Tibial artery (tissue), 4 donors: ENCODE measurements at regions of chr3 and their contacts with region 1.

Region 1: GRCh38 chr3:50321336-50322114 is 1.0 kb downstream of the HYAL2 start:
- DNase-seq: peak; percentile 90 to 94
- H3K4me3 ChIP-seq: peak overlapping the region; percentile 70 to 89
- H3K27ac ChIP-seq: peak overlapping the region; percentile 93
- H3K4me1 ChIP-seq: peaks cover 0 to 67% (median 31%) of the 10 kb centered on the region in 4 donors
- H3K27me3 ChIP-seq: no peaks in the 10 kb centered on the region
- CTCF ChIP-seq: peak; percentile 38 to 44

Region 2: GRCh38 chr3:50299929-50300685 is 21.4 kb before region 1 on chr3:
- intact Hi-C with region 1: loop called (anchors 2 kb)
- DNase-seq: peak in 1 of 2 donors; percentile 77
- H3K4me3 ChIP-seq: peak overlapping the region; percentile 61 to 86
- H3K27ac ChIP-seq: peak overlapping the region; percentile 90 to 93
- H3K4me1 ChIP-seq: peaks cover 8 to 41% (median 32%) of the 10 kb centered on the region in 4 donors
- H3K27me3 ChIP-seq: no peaks in the 10 kb centered on the region
- CTCF ChIP-seq: no peak